A673 (cell line): ENCODE measurements at regions of chr9 and their contacts with region 1.

Region 1: GRCh38 chr9:112299514-112299913 is 33.9 kb downstream of the PTBP3 start:
- DNase-seq: no peak
- H3K4me3 ChIP-seq: no peak overlapping the region
- H3K27ac ChIP-seq: no peak overlapping the region
- H3K4me1 ChIP-seq: peaks cover 8% of the 10 kb centered on the region
- H3K27me3 ChIP-seq: no peaks in the 10 kb centered on the region
- CTCF ChIP-seq: no peak

Region 2: GRCh38 chr9:111992523-111992922 is 307.0 kb before region 1 on chr9:
- CTCF ChIA-PET with region 1: no interaction called
- POLR2A ChIA-PET with region 1: no interaction called
- intact Hi-C with region 1: no loop called
- DNase-seq: no peak
- H3K4me3 ChIP-seq: no peak overlapping the region
- H3K27ac ChIP-seq: no peak overlapping the region
- H3K4me1 ChIP-seq: no peaks in the 10 kb centered on the region
- H3K27me3 ChIP-seq: no peaks in the 10 kb centered on the region
- CTCF ChIP-seq: no peak

Region 3: DNA sequence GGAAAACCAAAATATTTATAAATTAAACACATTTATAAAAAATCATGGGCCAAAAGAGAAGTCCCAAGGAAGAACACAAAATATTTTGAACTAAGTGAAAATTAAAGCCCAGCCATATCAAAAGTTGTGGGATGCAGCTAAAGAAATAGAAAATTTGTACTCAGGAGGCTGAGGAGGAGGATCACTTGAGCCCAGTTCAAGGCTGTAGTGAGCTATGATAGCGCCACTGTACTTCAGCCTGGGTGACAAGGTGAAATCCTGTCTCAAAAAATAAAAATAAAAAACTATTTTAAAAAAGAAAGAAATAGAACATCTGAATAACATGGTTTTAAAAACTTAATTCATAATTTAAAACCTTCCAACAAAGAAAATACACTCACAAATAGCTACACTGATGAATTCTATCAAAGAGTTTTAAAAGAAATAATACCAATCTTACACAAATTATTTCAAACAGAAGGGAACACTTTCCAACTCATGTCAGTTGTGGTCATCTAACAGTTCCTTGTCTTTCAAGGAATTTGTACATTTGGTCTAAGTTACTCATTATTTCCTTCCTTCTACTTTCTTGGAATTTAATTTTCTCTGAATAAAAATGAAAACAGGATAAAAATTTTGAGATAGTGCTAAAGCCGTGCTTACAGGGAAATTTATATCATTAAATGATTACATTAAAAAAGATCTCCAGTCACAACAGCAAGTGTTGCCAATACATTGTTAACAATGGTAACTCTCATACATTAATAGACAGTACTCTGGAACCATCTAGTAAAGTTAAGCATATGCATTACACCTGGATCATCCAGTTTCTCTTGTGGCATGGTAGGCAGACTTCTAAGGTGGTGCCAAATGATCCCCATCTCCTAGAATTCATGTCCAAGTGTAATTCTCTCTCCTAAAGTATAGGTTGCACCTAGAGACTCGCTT is 16.1 kb after region 1 on chr9:
- CTCF ChIA-PET with region 1: no interaction called
- POLR2A ChIA-PET with region 1: interaction called, 10 read pairs
- intact Hi-C with region 1: no loop called
- DNase-seq: no peak
- H3K4me3 ChIP-seq: no peak overlapping the region
- H3K27ac ChIP-seq: no peak overlapping the region
- H3K4me1 ChIP-seq: no peaks in the 10 kb centered on the region
- H3K27me3 ChIP-seq: no peaks in the 10 kb centered on the region
- CTCF ChIP-seq: no peak

Region 4: DNA sequence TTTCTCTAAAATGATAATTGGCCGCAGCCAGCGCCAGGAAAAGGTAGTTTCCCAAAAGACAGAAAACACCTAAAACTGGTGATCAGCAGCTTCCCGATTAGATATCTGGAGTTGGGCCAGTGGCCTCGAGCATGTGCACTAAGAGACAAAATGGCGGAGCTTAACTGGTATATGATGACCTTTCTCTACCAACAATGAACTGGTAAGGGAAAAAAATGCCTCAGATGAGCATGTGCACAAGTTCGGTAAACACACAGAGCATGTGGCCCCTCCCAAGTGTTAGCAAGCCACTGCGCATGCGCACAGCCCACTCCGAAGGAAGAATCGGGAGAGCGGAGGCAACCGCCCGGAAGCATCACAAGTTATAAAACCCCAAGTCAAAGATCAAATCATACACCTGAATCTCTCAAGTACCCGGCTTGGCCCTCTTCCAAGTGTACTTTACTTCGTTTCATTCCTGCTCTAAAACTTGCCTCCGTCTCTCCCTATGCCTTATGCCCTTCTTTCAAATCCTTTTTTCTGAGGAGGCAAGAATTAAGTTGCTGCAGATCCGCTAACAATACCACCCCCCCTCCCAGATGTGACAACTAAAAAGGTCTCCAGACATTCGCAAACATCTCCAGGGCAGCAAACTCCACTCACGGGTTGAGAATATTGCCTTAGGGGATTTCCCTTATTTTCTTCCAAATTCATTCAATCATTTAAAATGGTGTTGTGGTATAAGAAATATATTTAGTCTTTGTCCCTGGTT is 48.9 kb after region 1 on chr9:
- CTCF ChIA-PET with region 1: no interaction called
- POLR2A ChIA-PET with region 1: no interaction called
- intact Hi-C with region 1: no loop called
- DNase-seq: peak; percentile 94
- H3K4me3 ChIP-seq: peak overlapping the region; percentile 34
- H3K27ac ChIP-seq: peak overlapping the region; percentile 68
- H3K4me1 ChIP-seq: peaks cover 16% of the 10 kb centered on the region
- H3K27me3 ChIP-seq: no peaks in the 10 kb centered on the region
- CTCF ChIP-seq: no peak